Vagina (tissue), 2 donors: ENCODE measurements at regions of chr14 and their contacts with region 1.

Region 1: DNA sequence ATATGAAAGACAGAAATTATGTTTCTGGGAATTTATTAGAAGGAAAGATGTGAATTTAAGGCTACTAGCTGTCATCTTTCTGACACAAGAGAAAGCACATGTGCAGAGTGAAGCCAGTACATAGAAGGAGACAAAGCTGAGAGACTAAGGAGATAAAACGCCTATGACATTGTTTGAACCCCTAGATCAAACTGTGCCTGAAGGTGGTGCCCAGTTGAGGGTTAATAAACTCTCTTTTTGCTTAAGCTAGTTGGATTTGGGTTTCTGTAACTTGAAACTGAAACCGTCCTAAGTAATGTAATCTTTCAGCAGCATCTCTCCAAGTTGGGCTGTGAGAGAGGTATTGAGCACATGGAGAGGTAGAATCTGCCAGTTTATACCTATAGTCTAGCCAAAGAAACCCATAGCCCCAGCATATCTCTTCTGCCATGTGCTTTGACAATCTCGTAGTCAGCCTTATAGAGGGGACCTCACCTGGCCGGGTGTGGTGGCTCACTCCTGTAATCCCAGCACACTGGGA is 84.2 kb downstream of the LRRC74A start:
- DNase-seq: no peak
- H3K4me3 ChIP-seq: no peak overlapping the region
- H3K27ac ChIP-seq: no peak overlapping the region
- H3K4me1 ChIP-seq: peaks cover 29% of the 10 kb centered on the region
- H3K27me3 ChIP-seq: no peaks in the 10 kb centered on the region
- CTCF ChIP-seq: no peak
- POLR2A ChIP-seq: no peak

Region 2: GRCh38 chr14:76413962-76414625 is 496.3 kb before region 1 on chr14:
- intact Hi-C with region 1: no loop called
- DNase-seq: no peak
- H3K4me3 ChIP-seq: no peak overlapping the region
- H3K27ac ChIP-seq: no peak overlapping the region
- H3K4me1 ChIP-seq: no peaks in the 10 kb centered on the region
- H3K27me3 ChIP-seq: no peaks in the 10 kb centered on the region
- CTCF ChIP-seq: no peak
- POLR2A ChIP-seq: no peak

Region 3: DNA sequence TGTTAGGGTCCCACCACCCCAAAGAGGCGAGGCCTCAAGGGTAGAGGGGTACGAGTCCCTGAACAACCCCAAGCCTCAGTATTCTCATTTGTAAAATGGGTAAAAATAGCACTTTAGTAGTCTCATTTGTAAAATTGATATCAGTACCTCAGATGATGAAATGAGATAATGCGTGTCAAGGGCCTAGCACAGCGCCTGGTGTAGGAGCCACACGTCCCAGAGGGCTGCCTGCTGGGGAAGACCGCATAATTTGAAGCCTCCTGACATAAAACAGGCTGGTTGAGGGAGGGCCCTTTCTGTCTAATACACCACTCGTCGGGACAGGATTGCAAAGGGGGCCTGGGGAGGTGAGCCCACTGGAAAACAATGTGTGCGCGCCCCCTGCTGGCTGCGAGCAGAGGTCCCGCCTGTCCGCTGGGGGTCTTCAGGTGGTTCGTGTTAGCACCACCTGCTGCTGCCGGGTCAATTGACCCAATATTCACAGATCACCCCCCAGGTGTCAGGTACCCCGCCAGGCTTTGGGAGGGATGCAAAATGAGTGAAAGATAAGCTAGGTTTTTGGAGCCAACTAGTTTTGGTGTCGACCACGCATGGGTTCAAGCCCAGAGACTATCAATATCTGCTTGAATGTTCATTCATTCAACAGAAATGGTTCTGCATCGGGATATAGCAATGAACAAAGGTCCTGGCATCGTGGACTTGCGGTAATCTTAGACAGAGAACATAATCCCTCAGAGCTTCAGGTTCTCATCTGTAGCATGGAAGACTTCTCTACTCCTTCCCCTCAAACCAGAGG is 142.8 kb after region 1 on chr14:
- intact Hi-C with region 1: loop called (anchors 5 kb)
- DNase-seq: no peak
- H3K4me3 ChIP-seq: no peak overlapping the region
- H3K27ac ChIP-seq: peak overlapping the region; percentile 65
- H3K4me1 ChIP-seq: peaks cover 23% of the 10 kb centered on the region
- H3K27me3 ChIP-seq: no peaks in the 10 kb centered on the region
- CTCF ChIP-seq: peak; percentile 88 to 99 (median 94)
- POLR2A ChIP-seq: no peak

Region 4: DNA sequence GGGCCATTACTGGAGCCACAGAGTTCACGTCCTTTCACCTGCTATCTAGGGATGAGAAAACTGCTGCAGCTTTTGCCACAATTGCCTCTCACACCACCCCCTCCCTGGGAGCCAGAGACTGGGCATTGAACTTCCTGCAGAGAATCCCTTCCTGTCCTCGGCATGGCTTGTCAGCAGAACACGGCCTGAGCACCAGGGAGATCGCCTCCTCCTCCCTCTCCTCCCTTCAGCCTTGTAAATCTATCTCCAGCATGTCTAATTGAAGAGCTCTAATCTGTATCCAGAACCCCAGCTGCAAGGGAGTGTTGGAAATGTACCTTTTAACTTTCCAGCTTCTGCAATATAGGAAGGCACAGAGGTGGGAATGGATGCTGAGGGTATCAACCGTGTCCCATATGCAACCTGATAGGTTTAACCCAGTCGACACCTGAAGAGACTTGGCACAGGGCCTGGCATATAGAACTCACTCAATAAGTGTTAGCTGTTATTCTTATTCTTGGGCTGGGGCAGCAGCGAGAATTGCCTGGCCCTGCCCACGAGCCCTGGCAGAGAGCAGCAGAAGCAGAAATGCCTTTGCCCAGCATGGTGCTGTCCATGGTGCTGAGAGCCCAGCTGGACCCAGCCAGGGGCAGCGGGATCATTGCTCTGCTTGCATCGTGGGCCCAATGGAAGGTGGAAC is 298.0 kb after region 1 on chr14:
- intact Hi-C with region 1: no loop called
- DNase-seq: no peak
- H3K4me3 ChIP-seq: no peak overlapping the region
- H3K27ac ChIP-seq: no peak overlapping the region
- H3K4me1 ChIP-seq: no peaks in the 10 kb centered on the region
- H3K27me3 ChIP-seq: no peaks in the 10 kb centered on the region
- CTCF ChIP-seq: no peak
- POLR2A ChIP-seq: no peak